ENCODE measurements at regions of chr10 and their contacts with region 1.

Region 1: DNA sequence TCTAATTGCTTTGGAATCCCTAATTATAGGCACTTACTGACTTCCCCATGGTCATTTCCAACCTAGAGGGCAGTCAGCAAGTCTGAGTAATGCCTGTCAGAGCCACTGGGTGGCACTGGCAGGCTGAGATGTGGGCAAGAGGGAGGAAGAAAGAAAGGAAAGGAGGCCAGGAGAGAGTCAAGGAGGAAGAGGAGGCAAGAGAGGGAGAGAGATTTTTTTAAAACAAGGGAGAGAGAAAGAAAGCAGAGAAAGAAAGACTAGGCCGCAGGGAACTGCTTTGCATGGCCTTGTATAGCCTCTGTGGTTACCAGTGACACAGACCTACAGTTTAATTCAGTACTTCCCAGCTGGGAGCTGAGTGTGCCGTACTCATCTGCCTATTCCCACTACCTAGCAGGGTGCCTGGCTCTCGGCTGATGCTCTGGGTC is 210.4 kb upstream of the ADO start:
- DNase-seq: peak; percentile 54
- H3K4me3 ChIP-seq: no peak overlapping the region
- H3K27ac ChIP-seq: no peak overlapping the region
- H3K4me1 ChIP-seq: no peaks in the 10 kb centered on the region
- H3K27me3 ChIP-seq: peaks cover 31% of the 10 kb centered on the region
- CTCF ChIP-seq: peak; percentile 89

Region 2: GRCh38 chr10:62826273-62826672 is 232.2 kb after region 1 on chr10:
- intact Hi-C with region 1: loop called (anchors 10 kb)
- DNase-seq: no peak
- H3K4me3 ChIP-seq: no peak overlapping the region
- H3K27ac ChIP-seq: no peak overlapping the region
- H3K4me1 ChIP-seq: no peaks in the 10 kb centered on the region
- H3K27me3 ChIP-seq: peaks cover 24% of the 10 kb centered on the region
- CTCF ChIP-seq: no peak

Region 3: DNA sequence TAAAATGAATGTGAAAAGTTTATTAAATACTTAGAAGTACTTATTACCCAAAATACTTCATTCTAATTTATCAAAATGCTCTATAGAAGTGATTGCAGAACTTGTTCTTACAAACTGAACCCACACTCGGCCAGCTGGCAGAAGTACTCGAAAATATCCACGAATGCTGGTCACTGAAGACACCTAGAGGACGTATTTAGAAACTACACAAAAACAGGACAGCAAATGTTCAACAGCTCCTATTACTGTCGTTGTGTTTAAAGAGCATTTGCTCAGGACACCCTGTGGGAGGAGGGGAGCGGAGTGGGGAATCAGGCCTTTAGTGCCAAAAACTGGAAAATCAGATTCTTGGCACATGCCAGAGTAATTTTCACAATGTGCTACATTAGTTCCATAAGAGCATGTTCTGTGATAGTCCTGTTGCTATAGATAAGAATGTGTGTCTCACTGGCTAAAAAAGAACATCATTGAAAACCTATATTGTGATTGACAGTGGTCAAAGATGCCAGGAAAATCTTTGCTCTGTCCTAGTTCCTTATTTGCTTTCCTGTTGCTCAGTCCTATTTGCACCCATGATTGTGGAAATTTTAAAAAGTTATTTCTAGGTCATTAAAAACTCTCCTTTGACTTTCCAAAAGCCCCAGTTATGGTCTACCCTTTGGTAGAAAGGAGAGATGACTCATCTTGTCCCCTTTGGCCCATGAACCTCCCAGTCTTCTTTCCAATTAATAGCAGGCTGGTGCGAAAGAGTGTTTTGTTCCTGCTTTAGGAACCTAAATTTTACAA is 490.0 kb after region 1 on chr10:
- intact Hi-C with region 1: loop called (anchors 10 kb)
- DNase-seq: peak; percentile 29
- H3K4me3 ChIP-seq: no peak overlapping the region
- H3K27ac ChIP-seq: no peak overlapping the region
- H3K4me1 ChIP-seq: peaks cover 4% of the 10 kb centered on the region
- H3K27me3 ChIP-seq: peaks cover 7% of the 10 kb centered on the region
- CTCF ChIP-seq: peak; percentile 77

Region 4: GRCh38 chr10:63157845-63158624 is 563.9 kb after region 1 on chr10:
- intact Hi-C with region 1: loop called (anchors 10 kb)
- DNase-seq: no peak
- H3K4me3 ChIP-seq: no peak overlapping the region
- H3K27ac ChIP-seq: no peak overlapping the region
- H3K4me1 ChIP-seq: peaks cover 20% of the 10 kb centered on the region
- H3K27me3 ChIP-seq: no peaks in the 10 kb centered on the region
- CTCF ChIP-seq: peak; percentile 85

Measured in left ventricle myocardium inferior (tissue), 1 donor.